ENCODE measurements at regions of chr9 and their contacts with region 1.

Region 1: DNA sequence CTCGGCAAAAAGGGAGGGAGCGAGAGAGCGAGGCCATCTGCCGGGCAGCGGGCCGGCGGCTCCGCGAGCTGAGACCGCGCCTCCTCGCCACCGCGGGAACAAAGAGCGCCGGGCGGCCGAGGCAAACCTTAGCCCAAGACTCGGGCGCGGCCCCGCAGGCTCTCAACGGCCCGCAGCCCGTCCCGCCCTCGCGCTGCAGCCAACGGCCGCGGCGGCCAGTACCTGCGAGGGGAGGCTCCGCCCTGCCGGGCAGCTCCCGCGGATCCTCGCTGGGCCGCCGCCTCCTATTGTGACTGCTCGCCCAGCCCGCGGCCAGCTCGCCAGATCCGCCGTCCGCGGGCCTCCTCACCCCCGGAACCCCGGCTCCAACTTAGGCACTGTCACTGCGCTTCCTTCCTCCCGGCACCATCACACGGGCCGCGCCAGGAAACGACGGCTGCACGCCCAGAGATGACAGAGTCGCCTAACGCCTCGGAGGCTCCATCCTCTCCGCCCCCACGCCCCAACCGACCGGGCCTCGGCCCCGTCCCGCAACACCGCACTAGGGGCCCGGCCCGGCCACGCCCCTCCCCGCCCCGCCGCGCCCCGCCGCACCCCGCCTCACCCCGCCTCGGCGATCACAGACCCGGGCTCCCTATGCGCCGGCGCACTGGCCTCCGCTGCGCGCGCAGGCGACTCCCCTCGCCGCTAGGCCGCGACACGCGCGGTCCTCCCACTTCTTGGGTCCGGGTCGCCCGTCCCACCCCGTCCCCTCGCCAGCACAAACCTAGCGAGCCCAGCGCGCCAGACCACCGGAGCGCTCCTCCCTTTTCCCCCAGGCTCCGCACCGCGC is 479 bp upstream of the RNF38 start:
- DNase-seq: peak; percentile 82
- H3K4me3 ChIP-seq: peak overlapping the region; percentile 92 to 97 (median 95)
- H3K27ac ChIP-seq: peak overlapping the region; percentile 88
- H3K4me1 ChIP-seq: peaks cover 14% of the 10 kb centered on the region
- H3K27me3 ChIP-seq: no peaks in the 10 kb centered on the region
- CTCF ChIP-seq: peak in 1 of 2 donors; percentile 8
- POLR2A ChIP-seq: peak; percentile 77

Region 2: GRCh38 chr9:36237230-36237629 is 163.3 kb before region 1 on chr9:
- CTCF ChIA-PET with region 1: no interaction called
- POLR2A ChIA-PET with region 1: no interaction called
- dilution Hi-C with region 1: no loop called
- intact Hi-C with region 1: no loop called
- DNase-seq: no peak
- H3K4me3 ChIP-seq: no peak overlapping the region
- H3K27ac ChIP-seq: no peak overlapping the region
- H3K4me1 ChIP-seq: no peaks in the 10 kb centered on the region
- H3K27me3 ChIP-seq: no peaks in the 10 kb centered on the region
- CTCF ChIP-seq: no peak
- POLR2A ChIP-seq: no peak

Region 3: GRCh38 chr9:36258208-36258988 is 142.2 kb before region 1 on chr9 and contains the start of gene GNE:
- CTCF ChIA-PET with region 1: no interaction called
- POLR2A ChIA-PET with region 1: no interaction called
- dilution Hi-C with region 1: no loop called
- intact Hi-C with region 1: loop called (anchors 5 kb)
- DNase-seq: peak; percentile 95
- H3K4me3 ChIP-seq: peak within 1 kb of the TSS; percentile 65 to 84 (median 66)
- H3K27ac ChIP-seq: peak within 1 kb of the TSS; percentile 44
- H3K4me1 ChIP-seq: peaks cover 4% of the 10 kb centered on the region
- H3K27me3 ChIP-seq: no peaks in the 10 kb centered on the region
- CTCF ChIP-seq: no peak
- POLR2A ChIP-seq: peak; percentile 83
- total RNA-seq, gene GNE: 11.4 and 12.3 TPM in 2 replicates

Region 4: DNA sequence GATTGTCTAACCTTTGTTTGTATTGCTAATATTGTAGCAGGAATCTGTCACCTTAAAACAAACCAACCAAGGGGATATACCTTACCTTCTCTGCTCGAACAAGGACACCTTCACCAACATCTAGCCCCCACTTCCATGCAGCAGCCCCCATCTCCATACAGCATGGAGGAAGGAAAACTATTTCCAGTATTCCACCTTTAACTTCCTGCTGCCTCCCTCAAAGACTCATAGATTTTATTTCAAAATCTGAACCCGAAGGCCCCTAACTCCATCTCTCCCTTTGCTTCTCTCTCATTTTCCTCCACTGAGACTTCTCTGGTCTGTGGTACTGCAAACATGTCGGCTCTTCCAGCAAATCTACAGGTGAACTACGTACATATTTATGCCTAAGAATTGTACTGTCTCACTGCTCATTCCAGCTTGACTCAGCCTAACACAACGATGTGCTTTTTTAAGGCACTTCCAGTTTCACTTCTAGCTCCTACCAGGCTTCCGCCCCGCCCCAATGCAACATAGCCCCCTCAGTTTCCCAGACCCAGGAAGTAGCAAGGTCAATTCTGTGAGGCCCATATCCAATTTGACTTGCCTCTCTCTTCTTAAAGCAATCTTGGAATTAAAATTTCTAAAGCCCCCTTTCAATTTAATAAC is 70.2 kb after region 1 on chr9:
- CTCF ChIA-PET with region 1: no interaction called
- POLR2A ChIA-PET with region 1: no interaction called
- dilution Hi-C with region 1: no loop called
- intact Hi-C with region 1: no loop called
- DNase-seq: peak; percentile 65
- H3K4me3 ChIP-seq: peak overlapping the region in 2 of 3 experiments; percentile 23 to 56
- H3K27ac ChIP-seq: peak overlapping the region; percentile 15
- H3K4me1 ChIP-seq: peaks cover 15% of the 10 kb centered on the region
- H3K27me3 ChIP-seq: no peaks in the 10 kb centered on the region
- CTCF ChIP-seq: no peak
- POLR2A ChIP-seq: no peak

Region 5: GRCh38 chr9:36487482-36488388 is 87.2 kb after region 1 on chr9:
- CTCF ChIA-PET with region 1: no interaction called
- POLR2A ChIA-PET with region 1: no interaction called
- dilution Hi-C with region 1: no loop called
- intact Hi-C with region 1: loop called (anchors 1 kb)
- DNase-seq: peak; percentile 88
- H3K4me3 ChIP-seq: peak overlapping the region; percentile 67 to 89 (median 75)
- H3K27ac ChIP-seq: peak overlapping the region; percentile 81
- H3K4me1 ChIP-seq: peaks cover 23% of the 10 kb centered on the region
- H3K27me3 ChIP-seq: no peaks in the 10 kb centered on the region
- CTCF ChIP-seq: peak in 1 of 2 donors; percentile 6
- POLR2A ChIP-seq: peak; percentile 82

Region 6: GRCh38 chr9:36572515-36573418 is 172.2 kb after region 1 on chr9 and contains the start of gene MELK:
- CTCF ChIA-PET with region 1: no interaction called
- POLR2A ChIA-PET with region 1: no interaction called
- dilution Hi-C with region 1: no loop called
- intact Hi-C with region 1: loop called (anchors 5 kb)
- DNase-seq: peak; percentile 82
- H3K4me3 ChIP-seq: peak within 1 kb of the TSS; percentile 87 to 93 (median 87)
- H3K27ac ChIP-seq: peak within 1 kb of the TSS; percentile 48
- H3K4me1 ChIP-seq: peaks cover 21% of the 10 kb centered on the region
- H3K27me3 ChIP-seq: no peaks in the 10 kb centered on the region
- CTCF ChIP-seq: no peak
- POLR2A ChIP-seq: peak; percentile 86
- total RNA-seq, gene MELK: 47.8 and 52.1 TPM in 2 replicates